Sigmoid colon (tissue), 7 donors: ENCODE measurements at regions of chr12 and their contacts with region 1.

Region 1: GRCh38 chr12:6195665-6196535 is 4.3 kb upstream of the CD9 start:
- DNase-seq: peak; percentile 94
- H3K4me3 ChIP-seq: no peak overlapping the region
- H3K27ac ChIP-seq: peak overlapping the region; percentile 56 to 78 (median 74)
- H3K4me1 ChIP-seq: peaks cover 0 to 32% (median 17%) of the 10 kb centered on the region in 4 donors
- H3K27me3 ChIP-seq: no peaks in the 10 kb centered on the region
- CTCF ChIP-seq: peak; percentile 90 to 99 (median 96)
- EP300 ChIP-seq: peak in 1 of 4 donors; percentile 46
- POLR2A ChIP-seq: no peak

Region 2: GRCh38 chr12:6062757-6063735 is 132.9 kb before region 1 on chr12:
- intact Hi-C with region 1: loop called (anchors 2 kb)
- DNase-seq: peak; percentile 76
- H3K4me3 ChIP-seq: no peak overlapping the region
- H3K27ac ChIP-seq: no peak overlapping the region
- H3K4me1 ChIP-seq: peaks cover 0 to 6% (median 2%) of the 10 kb centered on the region in 4 donors
- H3K27me3 ChIP-seq: no peaks in the 10 kb centered on the region
- CTCF ChIP-seq: peak; percentile 73 to 95 (median 90)
- EP300 ChIP-seq: no peak
- POLR2A ChIP-seq: no peak

Region 3: DNA sequence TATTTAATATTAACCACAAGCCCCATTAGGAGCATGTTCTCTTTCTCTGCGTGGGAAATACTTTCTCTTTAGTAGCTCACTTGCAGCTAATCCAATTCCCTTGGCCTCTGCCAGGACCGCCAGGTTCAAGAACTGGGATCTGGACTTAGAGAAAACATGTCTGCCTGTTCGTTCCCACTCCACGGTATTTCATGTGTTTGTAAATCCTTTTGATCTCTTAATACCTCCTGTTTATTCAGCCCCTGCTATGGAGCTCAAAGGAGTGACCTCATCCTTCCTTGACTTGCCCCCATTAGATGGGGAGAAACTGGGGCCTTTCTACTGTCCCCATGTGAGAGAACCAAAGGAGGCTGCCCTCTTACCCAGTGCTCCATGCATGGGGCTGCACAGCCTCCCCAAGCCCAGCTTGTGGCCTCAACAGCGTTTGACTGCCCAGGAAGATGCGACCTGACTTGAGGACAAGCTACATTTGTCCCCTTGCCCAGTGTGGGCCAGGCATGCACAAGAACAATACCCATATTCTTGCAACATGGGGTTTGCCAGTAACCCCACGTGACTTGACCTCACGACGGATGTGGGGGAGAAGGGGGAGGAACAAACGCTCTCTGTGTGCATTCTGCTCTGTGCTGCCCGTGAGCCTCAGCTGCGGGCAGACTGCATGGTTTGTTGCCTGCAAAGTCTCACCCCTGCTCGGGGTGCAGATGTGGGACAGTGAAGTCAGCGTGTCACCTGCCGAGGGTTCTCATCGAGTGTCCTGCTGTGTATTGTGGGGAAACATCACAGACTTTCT is 34.6 kb after region 1 on chr12:
- intact Hi-C with region 1: loop called (anchors 1 kb)
- DNase-seq: peak; percentile 94
- H3K4me3 ChIP-seq: peak overlapping the region in 2 of 4 donors; percentile 3 to 10
- H3K27ac ChIP-seq: peak overlapping the region; percentile 95 to 100 (median 98)
- H3K4me1 ChIP-seq: peaks cover 0 to 100% (median 98%) of the 10 kb centered on the region in 4 donors
- H3K27me3 ChIP-seq: no peaks in the 10 kb centered on the region
- CTCF ChIP-seq: no peak
- EP300 ChIP-seq: peak in 3 of 4 donors; percentile 47 to 90 (median 76)
- POLR2A ChIP-seq: no peak

Region 4: GRCh38 chr12:6278439-6279255 is 82.7 kb after region 1 on chr12:
- intact Hi-C with region 1: loop called (anchors 1 kb)
- DNase-seq: peak; percentile 92
- H3K4me3 ChIP-seq: peak overlapping the region; percentile 28 to 62 (median 58)
- H3K27ac ChIP-seq: peak overlapping the region; percentile 84 to 93 (median 91)
- H3K4me1 ChIP-seq: peaks cover 0 to 35% (median 29%) of the 10 kb centered on the region in 4 donors
- H3K27me3 ChIP-seq: no peaks in the 10 kb centered on the region
- CTCF ChIP-seq: peak in 2 of 4 experiments; percentile 47 to 97
- EP300 ChIP-seq: no peak
- POLR2A ChIP-seq: peak in 1 of 2 donors; percentile 27

Region 5: DNA sequence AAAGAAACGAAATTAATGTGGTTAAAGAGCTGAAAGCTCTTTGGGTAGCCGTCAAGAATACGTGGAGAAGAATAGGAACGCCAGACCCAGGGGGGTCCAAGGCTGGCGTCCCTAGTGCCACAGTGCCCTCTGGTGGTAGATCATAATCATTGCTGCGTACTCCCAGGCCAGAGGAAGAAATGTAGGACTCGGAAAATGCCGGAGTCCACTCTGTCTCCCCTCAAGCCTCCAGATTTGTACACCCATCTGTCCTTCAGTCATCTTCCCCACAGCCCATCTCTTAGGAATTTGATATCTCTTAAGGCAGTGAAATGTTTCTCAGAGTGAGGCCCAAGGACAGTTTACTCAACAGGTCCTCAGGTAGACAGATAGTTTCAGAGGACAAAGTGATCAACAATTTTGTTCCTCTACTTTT is 89.2 kb after region 1 on chr12:
- intact Hi-C with region 1: loop called (anchors 1 kb)
- DNase-seq: peak; percentile 83
- H3K4me3 ChIP-seq: no peak overlapping the region
- H3K27ac ChIP-seq: no peak overlapping the region
- H3K4me1 ChIP-seq: peaks cover 0 to 16% (median 6%) of the 10 kb centered on the region in 4 donors
- H3K27me3 ChIP-seq: no peaks in the 10 kb centered on the region
- CTCF ChIP-seq: peak; percentile 82 to 93 (median 90)
- EP300 ChIP-seq: peak in 1 of 4 donors; percentile 7
- POLR2A ChIP-seq: no peak

Region 6: DNA sequence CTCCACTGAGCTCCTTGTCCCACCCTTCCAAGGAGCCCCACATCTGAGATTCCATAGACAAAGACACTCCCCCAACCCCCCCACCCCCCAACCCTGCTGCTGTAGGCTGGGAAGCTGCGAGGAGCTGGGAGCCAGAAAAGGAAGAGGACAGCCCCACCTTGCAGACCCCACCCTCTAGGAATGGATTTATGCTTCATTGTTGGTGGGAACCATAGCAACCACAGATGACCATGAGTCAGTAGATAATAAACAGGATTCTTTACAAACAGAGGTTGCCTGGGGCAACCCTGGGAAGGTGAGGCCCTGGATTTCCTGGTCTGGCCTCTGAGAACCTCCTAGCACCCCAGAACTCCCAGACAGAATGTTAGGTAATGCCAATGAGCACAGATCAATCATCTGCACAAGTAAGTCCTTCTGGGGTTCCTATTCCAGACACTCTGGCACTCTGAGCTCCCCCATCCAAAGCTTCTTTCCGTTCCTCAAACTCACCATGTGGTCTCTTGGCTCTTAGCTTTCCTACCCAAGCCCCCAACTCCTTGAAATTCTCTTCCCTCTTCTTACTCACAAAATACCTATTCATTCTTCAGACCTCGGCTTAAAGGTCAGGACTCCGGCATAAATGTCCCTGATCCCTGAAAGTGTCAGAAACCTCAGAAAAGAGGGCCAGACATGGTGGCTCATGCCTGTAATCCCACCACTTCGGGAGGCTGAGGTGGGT is 99.4 kb after region 1 on chr12:
- intact Hi-C with region 1: no loop called
- DNase-seq: peak; percentile 51
- H3K4me3 ChIP-seq: no peak overlapping the region
- H3K27ac ChIP-seq: peak overlapping the region in 2 of 4 donors; percentile 50 to 53
- H3K4me1 ChIP-seq: peaks cover 0 to 23% (median 16%) of the 10 kb centered on the region in 4 donors
- H3K27me3 ChIP-seq: no peaks in the 10 kb centered on the region
- CTCF ChIP-seq: no peak
- EP300 ChIP-seq: no peak
- POLR2A ChIP-seq: no peak

Region 7: DNA sequence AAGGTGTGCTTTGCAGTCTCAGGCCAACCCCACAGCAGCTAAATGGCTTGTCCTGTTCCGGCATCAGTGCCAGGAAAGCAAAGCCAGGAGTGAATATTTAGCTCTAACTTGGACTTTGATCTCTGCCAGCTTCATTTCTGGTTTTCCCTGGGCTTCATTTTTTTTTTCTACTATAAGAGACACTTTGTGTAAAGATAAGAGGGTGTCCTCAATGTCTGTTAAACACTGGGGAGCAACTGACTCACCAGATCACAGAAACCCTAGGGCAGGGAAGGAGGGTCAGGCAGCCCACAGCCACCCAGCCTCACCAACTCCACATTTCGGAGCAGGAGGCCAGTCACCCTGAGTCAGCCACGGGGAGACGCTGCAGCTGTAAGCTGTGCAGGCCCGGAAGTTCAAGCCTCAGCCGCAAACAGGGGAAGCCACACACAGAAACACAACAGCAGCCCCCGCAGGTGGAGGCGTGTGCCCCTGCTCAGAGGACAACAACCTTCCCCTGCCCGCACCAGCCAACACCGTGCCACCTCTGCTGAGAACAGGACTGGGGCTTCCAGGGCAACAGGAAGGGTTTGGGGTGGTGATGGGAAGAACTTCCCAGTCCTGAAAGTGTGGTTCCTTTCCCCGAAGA is 139.7 kb after region 1 on chr12:
- intact Hi-C with region 1: loop called (anchors 5 kb)
- DNase-seq: peak; percentile 92
- H3K4me3 ChIP-seq: peak overlapping the region; percentile 29 to 88 (median 65)
- H3K27ac ChIP-seq: peak overlapping the region; percentile 93 to 98 (median 97)
- H3K4me1 ChIP-seq: peaks cover 0 to 84% (median 72%) of the 10 kb centered on the region in 4 donors
- H3K27me3 ChIP-seq: no peaks in the 10 kb centered on the region
- CTCF ChIP-seq: peak in 3 of 4 experiments; percentile 39 to 58 (median 48)
- EP300 ChIP-seq: no peak
- POLR2A ChIP-seq: no peak